ENCODE measurements at regions of chr2 and their contacts with region 1.

Region 1: GRCh38 chr2:177164584-177165052 is 48.0 kb upstream of the HNRNPA3 start:
- DNase-seq: peak; percentile 85
- H3K4me3 Mint-ChIP-seq: no peak overlapping the region
- H3K27ac Mint-ChIP-seq: no peak overlapping the region
- H3K4me1 Mint-ChIP-seq: peaks cover 47% of the 10 kb centered on the region
- H3K27me3 Mint-ChIP-seq: no peaks in the 10 kb centered on the region
- CTCF ChIP-seq: peak; percentile 98

Region 2: DNA sequence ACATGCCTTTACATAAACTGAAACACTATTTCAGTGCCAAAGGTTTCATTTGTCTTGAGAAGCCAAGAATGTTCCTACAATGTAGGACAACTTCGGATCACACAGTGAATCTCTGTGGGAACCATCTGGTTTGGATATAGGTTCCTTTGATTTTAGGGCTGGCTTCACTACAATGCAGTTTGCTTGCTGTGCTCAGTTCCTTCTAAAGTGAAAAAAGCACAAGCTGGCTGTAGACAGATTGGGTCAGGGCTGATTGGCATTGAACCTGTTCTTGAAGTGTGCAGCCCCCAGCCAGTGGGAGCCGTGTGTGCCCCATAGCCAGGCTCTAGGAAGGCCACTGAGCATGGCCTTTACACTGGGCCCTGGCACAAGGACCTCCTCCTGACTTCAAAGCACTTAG is 119.9 kb before region 1 on chr2:
- CTCF ChIA-PET with region 1: no interaction called
- intact Hi-C with region 1: no loop called
- DNase-seq: no peak
- H3K4me3 Mint-ChIP-seq: no peak overlapping the region
- H3K27ac Mint-ChIP-seq: no peak overlapping the region
- H3K4me1 Mint-ChIP-seq: no peaks in the 10 kb centered on the region
- H3K27me3 Mint-ChIP-seq: peaks cover 71% of the 10 kb centered on the region
- CTCF ChIP-seq: no peak

Region 3: GRCh38 chr2:177212106-177212890 is 47.7 kb after region 1 on chr2 and contains the start of gene HNRNPA3:
- CTCF ChIA-PET with region 1: interaction called, 14 read pairs
- intact Hi-C with region 1: no loop called
- DNase-seq: peak; percentile 99
- H3K4me3 Mint-ChIP-seq: peak within 1 kb of the TSS; percentile 85
- H3K27ac Mint-ChIP-seq: peak within 1 kb of the TSS; percentile 100
- H3K4me1 Mint-ChIP-seq: peaks cover 23% of the 10 kb centered on the region
- H3K27me3 Mint-ChIP-seq: peaks cover 13% of the 10 kb centered on the region
- CTCF ChIP-seq: no peak
- total RNA-seq, gene HNRNPA3: 212 and 234 TPM in 2 replicates

Region 4: DNA sequence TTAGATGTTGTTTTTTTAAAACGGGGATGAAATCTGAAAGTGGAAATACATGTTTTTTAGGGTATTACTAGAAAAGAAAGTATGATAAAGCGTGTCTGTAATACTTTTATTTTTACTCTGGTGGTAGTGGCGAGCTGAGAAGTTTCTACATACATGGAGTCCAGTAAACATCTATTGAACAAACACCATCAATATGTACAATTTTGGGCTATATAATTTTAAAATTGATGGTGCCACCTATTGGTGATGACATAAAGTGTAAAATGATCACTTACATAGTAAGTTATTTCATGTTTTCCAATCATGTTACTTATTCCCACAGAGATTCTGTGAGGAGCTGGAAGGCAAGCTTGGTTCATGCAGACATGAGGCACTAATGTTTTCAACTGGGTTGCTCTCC is 131.4 kb after region 1 on chr2:
- CTCF ChIA-PET with region 1: interaction called, 6 read pairs
- intact Hi-C with region 1: loop called (anchors 1 kb)
- DNase-seq: no peak
- H3K4me3 Mint-ChIP-seq: no peak overlapping the region
- H3K27ac Mint-ChIP-seq: no peak overlapping the region
- H3K4me1 Mint-ChIP-seq: peaks cover 8% of the 10 kb centered on the region
- H3K27me3 Mint-ChIP-seq: no peaks in the 10 kb centered on the region
- CTCF ChIP-seq: peak; percentile 53

Region 5: GRCh38 chr2:177397481-177398289 is 233.1 kb after region 1 on chr2:
- CTCF ChIA-PET with region 1: no interaction called
- intact Hi-C with region 1: loop called (anchors 5 kb)
- DNase-seq: peak; percentile 54
- H3K4me3 Mint-ChIP-seq: peak overlapping the region; percentile 7
- H3K27ac Mint-ChIP-seq: peak overlapping the region; percentile 70
- H3K4me1 Mint-ChIP-seq: peaks cover 68% of the 10 kb centered on the region
- H3K27me3 Mint-ChIP-seq: no peaks in the 10 kb centered on the region
- CTCF ChIP-seq: no peak

Region 6: DNA sequence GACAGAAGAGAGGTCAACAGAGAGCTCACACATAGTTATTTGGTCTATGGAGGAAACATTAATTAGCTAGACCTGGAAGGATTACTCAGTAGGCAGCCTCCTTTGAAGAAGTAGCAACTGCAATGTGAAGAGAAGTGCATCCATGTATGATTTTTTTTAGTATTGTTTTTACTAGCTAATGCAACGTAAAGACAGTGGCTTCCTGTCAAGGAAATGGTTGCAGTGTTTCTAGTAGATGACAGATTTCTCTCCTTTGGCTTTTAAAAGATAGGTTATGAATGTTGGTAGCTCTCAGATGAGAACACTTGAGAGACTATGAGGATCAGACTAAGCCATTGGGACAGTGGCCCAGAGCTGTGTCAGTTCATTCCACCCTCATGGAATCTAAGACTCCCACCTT is 403.8 kb after region 1 on chr2:
- CTCF ChIA-PET with region 1: no interaction called
- intact Hi-C with region 1: no loop called
- DNase-seq: no peak
- H3K4me3 Mint-ChIP-seq: no peak overlapping the region
- H3K27ac Mint-ChIP-seq: no peak overlapping the region
- H3K4me1 Mint-ChIP-seq: no peaks in the 10 kb centered on the region
- H3K27me3 Mint-ChIP-seq: peaks cover 26% of the 10 kb centered on the region
- CTCF ChIP-seq: no peak

Region 7: DNA sequence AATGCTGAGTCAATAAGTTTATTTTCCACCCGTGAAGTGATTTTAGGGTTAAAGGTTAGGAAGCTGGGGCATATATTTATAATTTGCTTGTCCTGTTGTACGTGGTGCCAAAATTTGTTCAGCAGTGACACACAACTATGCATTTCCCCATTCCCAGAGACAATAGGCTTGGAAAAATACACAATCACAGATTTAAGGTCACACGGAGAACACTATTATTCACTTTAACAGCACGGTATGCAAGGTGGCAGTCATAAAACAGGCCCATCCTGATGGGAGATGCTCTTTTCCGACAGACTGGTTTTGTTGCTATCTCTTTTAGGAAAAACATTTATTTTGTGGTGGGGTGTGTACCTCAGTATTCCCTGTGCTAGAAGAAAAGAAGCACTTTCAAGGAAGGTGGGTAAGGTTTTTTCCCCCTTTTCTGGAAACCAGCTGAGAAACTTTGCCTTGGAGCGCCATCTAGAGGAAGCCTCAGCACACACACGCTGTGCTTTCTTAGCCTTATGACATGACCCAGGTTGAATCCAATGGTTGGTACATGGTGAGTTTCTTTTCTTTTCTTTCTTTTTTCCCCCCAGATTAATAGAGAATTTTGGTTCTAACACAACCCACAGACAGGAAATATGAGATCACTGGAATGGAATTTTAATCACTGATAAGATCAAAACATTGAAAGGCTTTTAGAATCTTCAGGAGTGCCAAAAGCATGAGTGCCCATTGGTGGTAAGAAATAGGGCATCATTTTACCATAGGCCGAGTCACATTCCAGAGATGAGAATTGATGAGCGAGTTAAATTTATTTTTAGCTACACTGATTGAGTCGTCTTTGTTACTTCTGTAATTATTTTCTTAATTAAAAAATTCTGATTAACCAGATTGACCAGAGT is 560.0 kb after region 1 on chr2:
- CTCF ChIA-PET with region 1: interaction called, 4 read pairs
- intact Hi-C with region 1: loop called (anchors 5 kb)
- DNase-seq: peak; percentile 58
- H3K4me3 Mint-ChIP-seq: no peak overlapping the region
- H3K27ac Mint-ChIP-seq: no peak overlapping the region
- H3K4me1 Mint-ChIP-seq: no peaks in the 10 kb centered on the region
- H3K27me3 Mint-ChIP-seq: peaks cover 13% of the 10 kb centered on the region
- CTCF ChIP-seq: peak; percentile 88

Measured in Calu3 (cell line).